ENCODE measurements at regions of chr2 and their contacts with region 1.

Region 1: GRCh38 chr2:231452799-231453508 is 11.3 kb downstream of the NCL start:
- DNase-seq: no peak
- H3K4me3 ChIP-seq: no peak overlapping the region
- H3K27ac ChIP-seq: peak overlapping the region; percentile 10
- H3K4me1 ChIP-seq: no peaks in the 10 kb centered on the region
- H3K27me3 ChIP-seq: no peaks in the 10 kb centered on the region
- CTCF ChIP-seq: no peak

Region 2: GRCh38 chr2:230868947-230869913 is 583.7 kb before region 1 on chr2:
- CTCF ChIA-PET with region 1: interaction called, 20 read pairs
- POLR2A ChIA-PET with region 1: no interaction called
- intact Hi-C with region 1: no loop called
- DNase-seq: peak; percentile 21
- H3K4me3 ChIP-seq: peak overlapping the region; percentile 99
- H3K27ac ChIP-seq: peak overlapping the region; percentile 91
- H3K4me1 ChIP-seq: peaks cover 57% of the 10 kb centered on the region
- H3K27me3 ChIP-seq: no peaks in the 10 kb centered on the region
- CTCF ChIP-seq: no peak

Region 3: DNA sequence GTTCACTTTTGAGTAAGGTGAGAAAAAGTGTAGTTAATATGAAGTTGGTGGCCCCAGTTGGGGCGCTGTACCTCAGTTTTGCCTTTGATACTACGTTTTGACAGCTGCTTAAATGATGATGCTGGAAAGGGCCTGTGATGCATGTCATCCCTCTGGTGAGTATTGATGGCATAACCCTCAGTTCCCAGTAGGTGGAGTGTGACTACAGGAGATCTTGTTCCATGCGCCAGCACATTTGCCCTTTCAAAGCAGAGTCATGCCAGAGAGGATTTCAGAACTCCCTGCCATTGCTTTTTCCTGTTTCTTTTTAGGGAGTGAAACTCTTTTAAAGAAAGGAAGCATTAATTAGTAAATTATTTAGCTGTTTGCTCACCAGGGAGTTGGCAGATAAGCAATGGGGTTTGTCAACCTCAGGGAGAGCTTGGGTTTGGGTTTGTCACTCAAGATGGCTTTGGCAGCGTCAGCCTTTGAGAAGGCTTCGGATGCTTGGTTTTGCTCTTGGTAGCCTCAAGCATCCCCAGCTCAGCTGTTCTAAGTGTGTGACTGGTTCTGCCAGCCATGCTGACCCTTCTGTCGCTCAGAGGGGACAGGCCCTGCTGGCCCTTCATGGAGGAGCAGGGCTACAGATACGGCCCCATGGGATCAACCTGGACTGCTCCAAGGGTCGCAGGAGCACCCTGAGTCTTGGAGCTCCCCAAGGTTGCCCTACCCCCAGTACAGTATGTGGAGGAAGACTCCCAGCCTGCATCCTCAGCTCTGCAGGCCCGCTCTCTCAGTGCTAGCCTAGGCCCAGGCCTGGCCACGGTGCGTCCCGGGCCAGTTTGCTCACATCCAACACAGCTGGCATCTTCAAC is 225.4 kb before region 1 on chr2:
- CTCF ChIA-PET with region 1: no interaction called
- POLR2A ChIA-PET with region 1: no interaction called
- intact Hi-C with region 1: loop called (anchors 2 kb)
- DNase-seq: peak; percentile 82
- H3K4me3 ChIP-seq: no peak overlapping the region
- H3K27ac ChIP-seq: no peak overlapping the region
- H3K4me1 ChIP-seq: no peaks in the 10 kb centered on the region
- H3K27me3 ChIP-seq: no peaks in the 10 kb centered on the region
- CTCF ChIP-seq: peak; percentile 83

Region 4: DNA sequence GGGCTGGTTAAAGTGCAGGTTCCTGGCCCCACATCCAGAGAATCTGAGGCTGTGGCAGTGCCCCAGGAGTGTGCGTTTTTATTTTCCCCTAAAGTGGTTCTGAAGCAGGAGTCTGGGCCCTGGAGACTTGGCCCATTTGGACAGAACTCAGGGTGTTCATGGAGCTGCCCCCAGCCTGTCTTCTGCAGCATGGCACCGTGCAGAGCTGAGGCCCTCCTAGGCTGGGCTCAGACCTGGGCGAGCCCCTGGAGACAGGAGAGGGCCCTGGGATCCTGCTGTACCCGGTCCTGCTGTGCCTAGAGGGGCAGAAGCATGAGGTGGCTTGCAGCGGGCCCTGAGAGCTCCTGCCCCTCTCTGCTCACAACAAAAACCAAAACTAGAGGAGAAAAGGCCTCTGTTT is 116.3 kb before region 1 on chr2:
- CTCF ChIA-PET with region 1: interaction called, 11 read pairs
- POLR2A ChIA-PET with region 1: no interaction called
- intact Hi-C with region 1: no loop called
- DNase-seq: no peak
- H3K4me3 ChIP-seq: no peak overlapping the region
- H3K27ac ChIP-seq: no peak overlapping the region
- H3K4me1 ChIP-seq: peaks cover 4% of the 10 kb centered on the region
- H3K27me3 ChIP-seq: no peaks in the 10 kb centered on the region
- CTCF ChIP-seq: no peak

Region 5: GRCh38 chr2:231364961-231365810 is 87.8 kb before region 1 on chr2:
- CTCF ChIA-PET with region 1: no interaction called
- POLR2A ChIA-PET with region 1: no interaction called
- intact Hi-C with region 1: no loop called
- DNase-seq: peak; percentile 20
- H3K4me3 ChIP-seq: no peak overlapping the region
- H3K27ac ChIP-seq: no peak overlapping the region
- H3K4me1 ChIP-seq: no peaks in the 10 kb centered on the region
- H3K27me3 ChIP-seq: no peaks in the 10 kb centered on the region
- CTCF ChIP-seq: no peak

Region 6: GRCh38 chr2:231482806-231483391 is 29.9 kb after region 1 on chr2:
- CTCF ChIA-PET with region 1: no interaction called
- POLR2A ChIA-PET with region 1: interaction called, 17 read pairs
- intact Hi-C with region 1: no loop called
- DNase-seq: peak; percentile 71
- H3K4me3 ChIP-seq: peak overlapping the region; percentile 22
- H3K27ac ChIP-seq: peak overlapping the region; percentile 50
- H3K4me1 ChIP-seq: no peaks in the 10 kb centered on the region
- H3K27me3 ChIP-seq: no peaks in the 10 kb centered on the region
- CTCF ChIP-seq: peak; percentile 93

Region 7: DNA sequence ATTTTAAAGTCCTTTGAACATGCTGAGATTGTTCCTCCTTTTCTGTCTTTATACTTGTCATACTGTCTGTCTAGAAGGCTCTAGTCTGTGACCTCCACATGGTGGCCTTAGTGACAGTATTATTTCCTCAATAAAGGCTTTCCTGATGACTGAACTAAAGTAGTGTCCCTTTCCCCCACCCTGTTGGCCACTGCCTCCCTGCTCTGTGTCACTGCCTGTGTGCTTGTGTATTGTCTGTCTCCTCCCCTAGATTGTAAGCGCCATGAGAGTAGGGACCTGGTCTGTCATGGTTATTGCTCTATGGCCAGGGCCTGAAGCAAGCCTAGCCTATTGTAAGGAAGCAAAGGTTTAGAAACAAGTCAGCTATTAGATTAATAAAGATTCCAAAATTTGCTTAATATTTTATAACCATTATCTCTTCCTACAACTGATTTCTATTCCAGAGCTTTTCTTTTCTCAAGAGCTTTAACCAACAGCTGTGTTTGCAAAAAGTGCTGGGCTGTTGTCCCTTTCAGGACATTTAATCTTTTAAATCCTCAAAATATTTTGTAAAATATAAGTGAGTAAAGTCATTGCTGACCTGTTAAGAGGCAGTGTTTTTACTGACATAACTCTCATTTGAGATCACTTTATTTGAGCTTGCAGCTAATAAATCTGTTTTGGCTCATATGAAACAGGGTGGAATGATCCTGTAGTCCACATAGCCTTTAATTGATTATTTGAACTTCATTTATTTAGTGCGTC is 544.0 kb after region 1 on chr2:
- CTCF ChIA-PET with region 1: no interaction called
- POLR2A ChIA-PET with region 1: no interaction called
- intact Hi-C with region 1: no loop called
- DNase-seq: no peak
- H3K4me3 ChIP-seq: no peak overlapping the region
- H3K27ac ChIP-seq: no peak overlapping the region
- H3K4me1 ChIP-seq: peaks cover 6% of the 10 kb centered on the region
- H3K27me3 ChIP-seq: no peaks in the 10 kb centered on the region
- CTCF ChIP-seq: no peak

Measured in A673 (cell line).